ENCODE measurements at regions of chr11 and their contacts with region 1.

Region 1: GRCh38 chr11:23112987-23113886 is 253.0 kb upstream of the CCDC179 start:
- DNase-seq: peak; percentile 63
- ATAC-seq: peak; percentile 70
- H3K4me3 ChIP-seq: no peak overlapping the region
- H3K27ac ChIP-seq: peak overlapping the region; percentile 75; the same call in 1 of the 2 replicates
- H3K4me1 ChIP-seq: peaks cover 9% of the 10 kb centered on the region
- H3K27me3 ChIP-seq: no peaks in the 10 kb centered on the region
- CTCF ChIP-seq: peak; percentile 80
- POLR2A ChIP-seq: no peak
- RAD21 ChIP-seq: peak; percentile 90

Region 2: GRCh38 chr11:22875869-22876473 is 237.3 kb before region 1 on chr11:
- CTCF ChIA-PET with region 1: interaction called, 6 read pairs
- POLR2A ChIA-PET with region 1: no interaction called
- dilution Hi-C with region 1: no loop called
- in situ Hi-C with region 1: no loop called
- intact Hi-C with region 1: loop called (anchors 5 kb)
- DNase-seq: peak; percentile 89
- ATAC-seq: peak; percentile 79
- H3K4me3 ChIP-seq: no peak overlapping the region
- H3K27ac ChIP-seq: no peak overlapping the region
- H3K4me1 ChIP-seq: peaks cover 4% of the 10 kb centered on the region
- H3K27me3 ChIP-seq: no peaks in the 10 kb centered on the region
- CTCF ChIP-seq: peak; percentile 99
- POLR2A ChIP-seq: no peak
- RAD21 ChIP-seq: peak; percentile 90

Region 3: GRCh38 chr11:22974251-22974650 is 139.0 kb before region 1 on chr11:
- CTCF ChIA-PET with region 1: no interaction called
- POLR2A ChIA-PET with region 1: no interaction called
- dilution Hi-C with region 1: no loop called
- in situ Hi-C with region 1: no loop called
- intact Hi-C with region 1: no loop called
- DNase-seq: no peak
- ATAC-seq: no peak
- H3K4me3 ChIP-seq: no peak overlapping the region
- H3K27ac ChIP-seq: no peak overlapping the region
- H3K4me1 ChIP-seq: no peaks in the 10 kb centered on the region
- H3K27me3 ChIP-seq: no peaks in the 10 kb centered on the region
- CTCF ChIP-seq: no peak
- POLR2A ChIP-seq: no peak
- RAD21 ChIP-seq: no peak

Region 4: DNA sequence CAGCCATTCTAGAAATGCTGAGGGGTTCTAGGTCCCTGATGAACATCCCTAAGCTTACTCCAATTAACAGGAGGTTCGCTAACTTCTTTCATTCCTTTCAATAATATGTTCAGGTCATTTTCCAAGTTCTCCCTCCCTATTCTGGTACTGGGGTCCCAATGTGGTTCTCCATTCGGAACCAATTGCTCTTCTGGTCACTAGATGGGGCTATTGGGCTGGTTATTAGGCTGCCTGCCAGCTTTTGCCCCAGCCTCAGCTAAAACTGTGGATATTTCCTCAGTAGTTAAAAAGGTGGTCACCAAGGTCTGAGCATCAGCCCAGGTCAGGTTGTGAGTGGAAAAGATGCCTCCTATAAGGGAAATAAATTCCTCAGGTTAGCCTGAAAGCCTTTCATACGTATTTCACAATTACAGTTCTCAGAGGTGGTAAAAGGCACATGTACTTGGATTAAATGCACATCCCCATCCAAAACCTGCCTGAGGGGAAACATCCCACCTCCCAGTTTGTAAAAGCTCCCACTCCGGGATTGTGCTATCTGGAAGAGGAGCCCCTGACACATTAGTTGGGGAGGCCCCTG is 91.9 kb before region 1 on chr11:
- CTCF ChIA-PET with region 1: interaction called, 4 read pairs
- POLR2A ChIA-PET with region 1: no interaction called
- dilution Hi-C with region 1: no loop called
- in situ Hi-C with region 1: loop called (anchors 10 kb)
- intact Hi-C with region 1: loop called (anchors 2 kb)
- DNase-seq: peak; percentile 51
- ATAC-seq: peak; percentile 86
- H3K4me3 ChIP-seq: no peak overlapping the region
- H3K27ac ChIP-seq: no peak overlapping the region
- H3K4me1 ChIP-seq: 0 out of 2 replicates have a peak, but pooled peaks cover 3% of the 10 kb centered on the region
- H3K27me3 ChIP-seq: no peaks in the 10 kb centered on the region
- CTCF ChIP-seq: peak; percentile 81
- POLR2A ChIP-seq: 0 out of 2 replicates have a peak, but pooled peaks have one; percentile 27
- RAD21 ChIP-seq: peak; percentile 85

Region 5: DNA sequence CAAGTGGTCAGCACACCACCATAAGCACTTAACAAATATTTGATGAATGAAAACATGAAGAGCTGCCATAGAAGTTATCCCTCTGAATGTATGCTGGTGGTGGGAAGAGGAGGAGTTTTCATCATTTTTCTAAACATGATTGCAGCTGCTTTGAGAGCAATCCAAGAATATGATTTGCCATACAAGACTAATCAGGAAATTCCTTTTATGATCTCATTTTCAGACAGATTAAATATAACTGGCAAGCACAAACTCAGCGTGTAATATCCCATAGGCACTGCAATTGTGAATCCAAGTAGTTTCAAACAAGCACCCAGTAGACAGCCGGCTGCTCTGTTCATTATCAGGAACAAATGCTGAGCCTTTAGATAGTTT is 877.9 kb after region 1 on chr11:
- CTCF ChIA-PET with region 1: no interaction called
- POLR2A ChIA-PET with region 1: no interaction called
- dilution Hi-C with region 1: no loop called
- in situ Hi-C with region 1: no loop called
- intact Hi-C with region 1: loop called (anchors 10 kb)
- DNase-seq: peak; percentile 90
- ATAC-seq: peak; percentile 68
- H3K4me3 ChIP-seq: no peak overlapping the region
- H3K27ac ChIP-seq: peak overlapping the region; percentile 96
- H3K4me1 ChIP-seq: peaks cover 21% of the 10 kb centered on the region
- H3K27me3 ChIP-seq: no peaks in the 10 kb centered on the region
- CTCF ChIP-seq: no peak
- POLR2A ChIP-seq: no peak
- RAD21 ChIP-seq: no peak

Region 6: DNA sequence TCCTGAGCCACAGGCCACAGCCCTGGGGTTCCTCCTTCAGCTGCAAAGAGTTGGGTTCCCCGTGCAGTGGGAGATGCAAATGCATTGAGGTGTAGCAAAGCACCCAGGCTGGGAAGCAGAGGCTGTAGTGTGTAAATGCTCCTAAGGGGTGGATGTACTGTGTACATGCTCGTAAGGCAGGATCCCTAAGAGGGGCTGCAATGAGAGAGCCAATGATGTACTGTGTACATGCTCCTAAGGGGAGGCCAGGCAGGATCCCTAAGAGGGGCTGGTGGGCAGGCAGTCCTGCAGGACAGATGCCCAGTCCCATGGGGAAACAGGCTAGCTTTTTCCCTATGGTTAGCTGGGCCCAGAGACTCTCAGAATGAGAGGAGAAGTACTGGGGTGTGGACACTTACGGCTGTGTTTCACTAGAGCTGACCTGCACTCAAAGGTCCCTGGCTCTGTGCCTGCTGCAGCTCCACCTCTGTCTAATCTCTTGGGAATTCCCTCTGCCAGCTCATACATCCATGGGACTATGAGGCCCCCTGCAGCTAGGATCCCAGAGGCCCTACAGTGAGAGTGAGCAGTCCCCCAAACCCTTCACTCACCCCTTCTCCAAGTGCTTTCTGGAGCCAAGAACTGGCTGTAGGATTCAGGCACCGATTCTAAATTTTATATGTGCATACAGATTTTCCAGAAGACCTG is 1121.7 kb after region 1 on chr11:
- CTCF ChIA-PET with region 1: no interaction called
- POLR2A ChIA-PET with region 1: no interaction called
- dilution Hi-C with region 1: no loop called
- in situ Hi-C with region 1: loop called (anchors 25 kb)
- intact Hi-C with region 1: loop called (anchors 1 kb)
- DNase-seq: peak; percentile 79
- ATAC-seq: peak; percentile 64
- H3K4me3 ChIP-seq: no peak overlapping the region
- H3K27ac ChIP-seq: no peak overlapping the region; the same call in 1 of the 2 replicates
- H3K4me1 ChIP-seq: peaks cover 8% of the 10 kb centered on the region
- H3K27me3 ChIP-seq: no peaks in the 10 kb centered on the region
- CTCF ChIP-seq: peak; percentile 56
- POLR2A ChIP-seq: no peak
- RAD21 ChIP-seq: peak; percentile 73

Measured in IMR-90 (cell line).